Activated naive CD8-positive, alpha-beta T cell treated with anti-CD3 and anti-CD28 coated beads, Interleukin-2, amount 10 ng/mL, durations not matched to agents 7 days and 5 days (primary cell): ENCODE measurements at regions of chr7 and their contacts with region 1.

Region 1: GRCh38 chr7:36777062-36777461 is 52.8 kb upstream of the AOAH start:
- DNase-seq: peak; percentile 53
- ATAC-seq: peak; percentile 76
- H3K4me3 Mint-ChIP-seq: peak overlapping the region; percentile 83
- H3K27ac Mint-ChIP-seq: peak overlapping the region; percentile 93
- H3K4me1 Mint-ChIP-seq: peaks cover 75% of the 10 kb centered on the region
- H3K27me3 Mint-ChIP-seq: no peaks in the 10 kb centered on the region

Region 2: DNA sequence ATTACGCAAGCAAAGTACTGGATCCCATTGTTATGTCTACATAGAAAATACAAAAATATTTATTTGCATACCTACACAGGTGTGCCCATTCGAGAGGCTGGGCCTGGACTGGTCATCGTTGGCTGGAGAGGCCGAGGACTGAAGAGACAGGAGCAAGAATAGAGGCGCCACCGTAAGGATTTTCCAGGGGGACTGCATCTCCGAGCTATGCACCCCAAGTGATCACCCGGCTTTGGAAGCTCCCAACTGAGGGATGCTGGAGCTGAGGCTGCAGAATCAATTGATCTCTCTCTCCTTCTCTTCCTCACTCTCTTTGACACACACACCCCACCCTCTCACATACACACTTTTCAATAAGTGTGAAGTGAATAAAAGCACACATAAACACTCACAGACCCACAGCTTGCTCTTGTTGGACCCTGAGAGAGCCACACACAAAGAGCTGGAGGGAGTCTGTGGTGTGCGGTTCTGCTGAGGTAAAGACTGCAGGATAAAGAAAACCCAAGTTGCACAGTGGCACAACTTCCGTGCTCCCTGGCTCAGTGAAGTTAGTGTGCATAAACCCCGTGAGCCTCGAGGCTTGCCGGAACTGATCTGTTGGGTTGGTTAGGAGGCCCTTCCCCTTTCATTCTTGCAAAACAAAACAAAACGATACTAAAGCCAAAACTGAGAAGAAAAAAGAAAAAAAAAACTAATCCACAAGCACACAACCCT is 53.0 kb before region 1 on chr7 and contains the start of gene AOAH:
- POLR2A ChIA-PET with region 1: interaction called, 16 read pairs
- DNase-seq: peak; percentile 75
- ATAC-seq: peak; percentile 95
- H3K4me3 Mint-ChIP-seq: peak within 1 kb of the TSS; percentile 89
- H3K27ac Mint-ChIP-seq: peak within 1 kb of the TSS; percentile 95
- H3K4me1 Mint-ChIP-seq: peaks cover 71% of the 10 kb centered on the region
- H3K27me3 Mint-ChIP-seq: no peaks in the 10 kb centered on the region
- total RNA-seq, gene AOAH: 19.4 to 26.8 TPM

Region 3: GRCh38 chr7:36787933-36788378 is 10.9 kb after region 1 on chr7:
- POLR2A ChIA-PET with region 1: interaction called, 23 read pairs
- DNase-seq: no peak
- ATAC-seq: peak; percentile 40
- H3K4me3 Mint-ChIP-seq: peak overlapping the region; percentile 66
- H3K27ac Mint-ChIP-seq: peak overlapping the region; percentile 82
- H3K4me1 Mint-ChIP-seq: peaks cover 68% of the 10 kb centered on the region
- H3K27me3 Mint-ChIP-seq: no peaks in the 10 kb centered on the region

Region 4: GRCh38 chr7:36852017-36852416 is 75.0 kb after region 1 on chr7:
- POLR2A ChIA-PET with region 1: no interaction called
- DNase-seq: no peak
- ATAC-seq: no peak
- H3K4me3 Mint-ChIP-seq: no peak overlapping the region
- H3K27ac Mint-ChIP-seq: no peak overlapping the region
- H3K4me1 Mint-ChIP-seq: peaks cover 6% of the 10 kb centered on the region
- H3K27me3 Mint-ChIP-seq: no peaks in the 10 kb centered on the region